ENCODE measurements at regions of chr9 and their contacts with region 1.

Region 1: GRCh38 chr9:128927731-128928411 is 7.1 kb downstream of the PHYHD1 start:
- DNase-seq: peak in 1 of 2 donors; percentile 60
- ATAC-seq: peak; percentile 91

Region 2: DNA sequence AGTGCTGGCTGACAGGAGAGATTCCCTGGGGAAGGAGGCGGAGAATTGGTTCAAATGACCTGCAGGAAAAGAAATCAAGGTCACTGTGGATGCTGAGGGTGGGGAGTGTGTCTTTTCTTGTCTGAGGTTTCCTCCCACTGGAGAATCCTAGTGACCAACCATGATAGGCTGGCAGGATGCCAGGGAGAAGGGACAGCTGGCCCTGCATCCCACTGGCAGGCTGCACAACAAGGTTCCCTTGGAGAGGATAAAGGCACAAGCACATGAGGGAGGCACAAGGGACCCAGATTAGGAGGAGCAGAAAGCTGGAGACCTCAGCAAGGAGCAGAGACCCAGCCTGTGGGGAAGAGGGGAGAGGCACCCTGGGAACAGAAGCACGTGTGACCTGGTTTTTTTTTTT is 192.5 kb before region 1 on chr9:
- intact Hi-C with region 1: no loop called
- DNase-seq: no peak
- ATAC-seq: no peak

Region 3: GRCh38 chr9:128786681-128787601 is 140.9 kb before region 1 on chr9 and contains the start of gene TBC1D13:
- intact Hi-C with region 1: no loop called
- DNase-seq: peak; percentile 88 to 93
- ATAC-seq: peak; percentile 99
- total RNA-seq, gene TBC1D13: 21.9 to 24.4 TPM

Region 4: DNA sequence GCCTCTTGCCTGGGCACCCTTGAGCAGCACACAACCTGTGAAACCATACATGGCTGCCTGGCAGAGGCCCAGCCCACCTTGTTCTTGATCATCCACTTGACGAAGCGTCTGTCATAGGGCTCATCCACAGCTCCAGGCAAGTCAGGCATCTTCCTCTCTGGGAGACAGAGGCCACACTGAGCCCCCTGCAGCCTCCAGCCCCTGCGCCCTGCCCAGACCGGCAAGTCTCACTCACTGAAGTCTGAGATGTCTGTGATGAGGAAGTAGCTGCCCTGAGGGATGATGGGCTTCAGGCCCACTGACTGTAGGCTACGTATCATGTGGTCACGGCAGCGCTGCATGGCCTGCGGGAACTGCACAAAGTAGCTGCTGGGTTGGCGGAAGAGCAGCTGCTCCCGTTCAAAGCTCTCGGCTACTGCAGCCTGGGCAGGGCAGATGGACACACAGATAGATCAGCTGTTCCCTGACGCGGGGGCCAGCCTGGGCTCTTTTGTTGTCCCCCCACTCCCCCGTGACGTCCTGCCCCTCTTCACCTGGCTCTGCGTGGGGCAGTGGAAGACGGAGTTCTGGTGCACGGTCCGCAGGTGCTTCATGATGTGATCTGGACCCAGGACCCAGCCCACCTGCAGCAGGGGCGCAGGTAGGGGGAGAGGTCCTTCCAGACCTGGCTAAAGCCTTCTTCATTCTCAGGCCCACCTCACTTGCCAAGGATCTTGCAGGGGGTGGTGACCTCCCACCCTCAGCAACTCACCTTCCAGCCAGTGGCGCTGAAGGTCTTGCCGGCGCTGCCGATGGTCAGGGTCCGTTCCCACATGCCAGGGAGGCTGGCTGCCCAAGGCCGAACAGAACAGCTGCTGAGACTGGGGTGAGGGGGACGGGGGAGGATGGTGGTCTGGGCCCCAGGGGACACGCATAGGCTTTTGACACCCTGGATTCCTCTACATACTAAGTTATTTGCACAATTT is 92.3 kb before region 1 on chr9:
- intact Hi-C with region 1: no loop called
- DNase-seq: no peak
- ATAC-seq: no peak

Region 5: DNA sequence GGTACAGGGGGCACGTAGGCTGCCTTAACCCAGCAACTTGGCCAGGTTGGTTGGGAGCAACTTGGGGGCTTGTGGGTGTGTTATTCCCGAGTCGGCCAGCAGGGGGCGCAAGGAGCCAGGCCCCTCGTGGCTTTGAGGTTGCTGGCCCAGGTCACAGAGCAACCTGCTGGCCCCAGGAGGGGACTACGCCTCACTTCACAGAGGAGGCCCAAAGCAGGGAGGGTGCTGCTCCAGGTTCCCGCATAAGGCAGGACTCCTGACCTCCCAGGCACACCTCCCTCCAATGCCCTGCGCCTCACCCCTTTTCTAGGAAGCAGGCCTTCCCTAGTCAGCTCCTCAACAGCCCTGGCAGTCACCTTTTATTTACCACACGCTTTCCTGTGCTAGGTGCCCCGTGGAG is 64.2 kb before region 1 on chr9:
- intact Hi-C with region 1: loop called (anchors 2 to 10 kb)
- DNase-seq: peak; percentile 44 to 82
- ATAC-seq: peak; percentile 75

Region 6: DNA sequence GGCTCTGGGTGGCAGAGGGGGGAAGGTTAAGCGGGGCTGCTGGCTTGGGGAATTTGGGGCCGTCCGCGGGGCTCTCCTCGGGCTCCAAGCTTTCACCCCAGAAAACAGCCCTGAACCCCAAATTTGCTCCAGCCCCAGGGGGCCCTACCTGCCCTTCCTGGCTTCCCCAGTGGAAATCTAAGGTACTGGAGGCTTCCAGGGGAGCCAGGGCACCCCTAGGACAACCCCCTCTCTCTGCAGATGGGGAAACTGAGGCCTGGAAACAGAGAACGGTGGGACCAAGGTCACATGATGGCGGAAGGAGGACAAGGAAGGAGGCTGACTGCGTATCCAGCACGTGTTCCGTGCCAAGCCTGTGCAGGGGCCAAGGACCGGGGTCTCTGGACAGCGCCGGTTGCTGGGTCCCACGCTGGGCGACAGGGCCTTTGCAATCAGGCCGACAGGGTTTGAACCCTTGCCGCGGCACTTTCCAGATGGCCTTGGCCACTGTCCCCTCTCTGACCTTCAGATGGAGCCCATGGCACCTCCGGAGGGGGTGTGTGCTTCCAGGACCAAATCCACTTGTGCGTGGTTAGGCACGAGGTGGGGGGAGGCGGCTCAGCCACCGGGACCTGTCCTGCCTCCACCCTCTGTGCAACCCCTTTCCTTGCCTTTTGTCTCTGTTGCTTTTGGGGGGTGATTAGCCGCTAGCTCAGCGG is 509.9 kb after region 1 on chr9:
- intact Hi-C with region 1: no loop called
- DNase-seq: no peak
- ATAC-seq: peak; percentile 23